ENCODE measurements at regions of chr5 and their contacts with region 1.

Region 1: GRCh38 chr5:132963175-132964104 is at the start of gene AFF4:
- DNase-seq: peak; percentile 97
- CTCF ChIP-seq: no peak

Region 2: GRCh38 chr5:133051580-133052332 is 88.3 kb after region 1 on chr5 and contains the start of gene HSPA4:
- CTCF ChIA-PET with region 1: no interaction called
- POLR2A ChIA-PET with region 1: interaction called, 14 read pairs
- DNase-seq: peak; percentile 99
- CTCF ChIP-seq: no peak

Region 3: DNA sequence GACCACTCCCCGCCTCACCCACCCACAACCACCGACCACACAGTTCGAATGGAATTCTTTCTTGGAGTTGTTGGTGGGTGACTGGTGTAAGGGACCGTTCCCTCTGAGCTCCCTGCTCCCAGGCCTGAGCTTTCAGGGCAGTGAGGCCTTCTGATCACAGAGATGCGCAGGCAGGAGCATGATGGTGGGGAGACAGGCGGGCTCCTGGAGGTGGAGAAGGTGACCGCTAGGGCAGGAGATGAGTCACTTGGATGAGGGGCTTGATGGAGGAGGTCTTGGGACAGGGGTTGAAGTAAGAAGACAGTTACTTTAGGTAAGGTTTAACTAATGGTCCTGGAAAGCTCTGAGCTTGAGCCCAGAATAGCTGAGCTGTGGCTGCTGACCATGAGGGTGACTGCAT is 176.9 kb after region 1 on chr5:
- CTCF ChIA-PET with region 1: no interaction called
- POLR2A ChIA-PET with region 1: no interaction called
- DNase-seq: no peak
- CTCF ChIP-seq: no peak

Region 4: DNA sequence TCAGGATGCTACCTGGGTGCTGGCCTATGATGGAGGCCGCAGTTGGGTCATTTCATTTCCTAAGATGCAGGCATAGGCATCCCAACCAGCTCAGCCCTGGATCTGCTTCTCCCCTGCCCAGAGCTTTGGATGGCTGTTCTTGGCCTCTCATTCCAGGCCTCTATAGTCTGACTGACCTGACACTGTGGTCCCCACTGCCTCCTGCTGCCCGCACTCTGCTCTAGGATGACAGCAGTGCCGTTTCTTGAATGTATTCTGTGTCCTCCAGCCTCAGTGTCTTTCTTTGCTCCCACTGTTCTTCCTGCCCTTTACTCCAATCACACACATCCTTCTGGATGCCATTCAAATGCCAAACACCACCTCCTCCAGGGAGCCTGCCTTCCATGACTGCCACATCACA is 324.1 kb after region 1 on chr5:
- CTCF ChIA-PET with region 1: no interaction called
- POLR2A ChIA-PET with region 1: no interaction called
- DNase-seq: peak; percentile 64
- CTCF ChIP-seq: peak; percentile 28

Measured in GM10248 (cell line).